WTC11 (cell line): ENCODE measurements at regions of chr12 and their contacts with region 1.

Region 1: DNA sequence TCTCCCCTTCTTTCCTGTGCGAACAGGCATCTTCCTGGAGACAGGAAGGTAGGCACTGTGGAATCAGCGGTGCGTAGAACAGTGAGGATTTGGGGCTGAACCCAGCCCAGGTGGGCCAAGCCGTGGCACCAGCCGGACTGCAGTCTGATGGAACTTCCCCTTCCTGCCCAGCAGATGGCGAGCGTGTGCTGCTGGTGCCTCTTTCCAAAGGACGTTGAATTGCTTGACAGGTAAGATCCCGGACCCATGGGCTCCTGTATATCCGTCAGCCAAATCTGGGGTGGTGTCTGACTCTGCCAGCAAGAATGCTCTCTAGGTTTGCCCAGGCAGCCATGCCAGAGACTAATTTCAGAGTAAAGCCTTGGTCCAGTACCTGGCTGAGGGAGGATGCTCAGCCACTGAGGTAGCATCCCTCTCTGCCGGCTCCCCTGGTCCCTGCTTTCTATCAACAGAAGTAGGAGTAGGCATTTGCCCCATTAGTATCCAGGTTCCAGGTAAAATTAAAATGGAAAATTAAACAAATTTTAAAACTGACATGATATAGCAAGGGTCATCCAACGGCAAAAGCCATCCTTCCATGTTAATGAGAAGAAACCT is 21.1 kb upstream of the KCNA5 start:
- DNase-seq: peak; percentile 67
- ATAC-seq: peak; percentile 89
- H3K4me3 Mint-ChIP-seq: no peak overlapping the region
- H3K27ac Mint-ChIP-seq: no peak overlapping the region
- H3K4me1 Mint-ChIP-seq: peaks cover 26% of the 10 kb centered on the region
- H3K27me3 Mint-ChIP-seq: peaks cover 4% of the 10 kb centered on the region
- CTCF ChIP-seq: peak; percentile 85

Region 2: DNA sequence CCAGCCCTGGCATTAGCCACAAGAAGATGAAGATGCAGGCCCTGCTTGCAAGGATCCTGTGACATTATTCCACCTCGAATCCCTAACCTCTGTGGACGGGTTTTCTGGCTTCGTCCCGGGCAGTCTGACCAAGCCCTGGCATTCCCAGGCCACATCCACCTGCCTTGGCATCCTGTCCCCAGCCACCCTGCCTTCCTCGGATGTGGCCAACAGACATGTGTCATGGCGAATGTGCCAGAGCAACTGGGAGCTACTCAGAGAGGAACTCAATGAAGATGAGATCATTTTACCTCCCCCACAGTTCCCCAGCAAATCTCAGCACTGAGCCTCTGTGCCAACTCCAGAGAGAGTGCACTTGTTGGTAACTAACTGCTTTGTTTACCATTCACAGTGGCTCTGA is 12.4 kb before region 1 on chr12:
- CTCF ChIA-PET with region 1: no interaction called
- POLR2A ChIA-PET with region 1: no interaction called
- DNase-seq: no peak
- ATAC-seq: no peak
- H3K4me3 Mint-ChIP-seq: no peak overlapping the region
- H3K27ac Mint-ChIP-seq: no peak overlapping the region
- H3K4me1 Mint-ChIP-seq: no peaks in the 10 kb centered on the region
- H3K27me3 Mint-ChIP-seq: no peaks in the 10 kb centered on the region
- CTCF ChIP-seq: no peak

Region 3: GRCh38 chr12:5059358-5059757 is 36.8 kb after region 1 on chr12:
- CTCF ChIA-PET with region 1: no interaction called
- POLR2A ChIA-PET with region 1: no interaction called
- DNase-seq: no peak
- ATAC-seq: no peak
- H3K4me3 Mint-ChIP-seq: no peak overlapping the region
- H3K27ac Mint-ChIP-seq: no peak overlapping the region
- H3K4me1 Mint-ChIP-seq: no peaks in the 10 kb centered on the region
- H3K27me3 Mint-ChIP-seq: peaks cover 19% of the 10 kb centered on the region
- CTCF ChIP-seq: no peak

Region 4: GRCh38 chr12:5083955-5084849 is 61.6 kb after region 1 on chr12:
- CTCF ChIA-PET with region 1: interaction called, 15 read pairs
- POLR2A ChIA-PET with region 1: no interaction called
- DNase-seq: no peak
- ATAC-seq: peak; percentile 55
- H3K4me3 Mint-ChIP-seq: no peak overlapping the region
- H3K27ac Mint-ChIP-seq: no peak overlapping the region
- H3K4me1 Mint-ChIP-seq: peaks cover 13% of the 10 kb centered on the region
- H3K27me3 Mint-ChIP-seq: no peaks in the 10 kb centered on the region; the same call in 1 of the 2 replicates
- CTCF ChIP-seq: peak; percentile 42